ENCODE measurements at regions of chr9 and their contacts with region 1.

Region 1: DNA sequence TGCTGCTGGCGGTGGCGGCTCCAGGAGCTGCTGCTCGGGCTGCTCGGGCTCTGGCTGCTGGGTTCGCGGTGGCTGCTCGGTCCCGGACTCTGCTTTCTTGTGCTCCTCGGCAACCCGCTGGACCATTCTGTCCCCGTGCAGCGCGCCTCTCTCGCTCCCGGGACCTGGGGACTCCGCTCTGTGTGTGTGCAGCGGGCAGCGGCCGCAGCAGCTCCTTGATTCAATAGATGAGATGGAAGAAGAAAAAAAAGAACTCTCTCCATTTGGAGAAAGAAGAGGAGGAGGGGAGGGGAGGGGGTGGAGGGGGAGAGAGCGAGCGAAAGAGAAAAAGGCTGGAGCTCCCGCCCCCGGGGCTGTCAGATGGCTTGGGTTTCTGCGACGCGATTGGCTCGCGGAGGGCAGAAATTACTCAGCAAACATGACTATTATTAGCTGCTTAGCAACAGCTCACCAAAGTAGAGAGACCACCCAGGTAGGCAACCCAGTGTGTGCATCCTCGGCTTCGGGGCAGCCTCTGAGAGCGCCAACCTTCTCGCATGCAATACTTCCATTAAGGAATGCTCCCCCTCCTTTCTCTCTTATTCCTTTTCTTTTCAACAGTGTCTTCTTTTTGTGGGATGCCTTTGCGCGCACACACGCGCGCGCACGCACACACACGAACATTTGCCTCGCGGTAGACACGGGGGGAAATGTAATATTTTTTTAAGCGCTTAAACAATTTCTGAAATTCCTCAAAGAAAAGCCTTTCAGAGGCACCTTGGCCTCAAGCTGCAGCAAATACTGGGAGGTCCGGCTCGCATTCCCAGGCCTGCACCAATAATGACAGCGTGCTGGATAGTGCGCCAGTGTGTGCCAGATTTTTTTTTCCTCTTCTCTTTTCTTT is 7.6 kb downstream of the PTCH1 start:
- DNase-seq: peak in 9 of 10 donors; percentile 44 to 80 (median 68)
- ATAC-seq: peak; percentile 28 to 52
- H3K4me3 Mint-ChIP-seq: peak overlapping the region; percentile 85 to 100 (median 94)
- H3K27ac Mint-ChIP-seq: peak overlapping the region; percentile 74 to 94 (median 84)
- H3K4me1 Mint-ChIP-seq: peaks cover 29 to 65% (median 46%) of the 10 kb centered on the region in 4 donors
- H3K27me3 Mint-ChIP-seq: peaks cover 0 to 25% (median 0%) of the 10 kb centered on the region in 5 donors

Region 2: GRCh38 chr9:95462249-95463147 is 46.7 kb before region 1 on chr9:
- POLR2A ChIA-PET with region 1: interaction called, 15 read pairs
- DNase-seq: peak; percentile 48 to 92 (median 81)
- ATAC-seq: peak; percentile 96 to 97
- H3K4me3 Mint-ChIP-seq: peak overlapping the region; percentile 71 to 90 (median 87)
- H3K27ac Mint-ChIP-seq: peak overlapping the region; percentile 24 to 92 (median 74)
- H3K4me1 Mint-ChIP-seq: peaks cover 21 to 44% (median 40%) of the 10 kb centered on the region in 4 donors
- H3K27me3 Mint-ChIP-seq: peaks cover 0 to 6% (median 0%) of the 10 kb centered on the region in 5 donors

Region 3: DNA sequence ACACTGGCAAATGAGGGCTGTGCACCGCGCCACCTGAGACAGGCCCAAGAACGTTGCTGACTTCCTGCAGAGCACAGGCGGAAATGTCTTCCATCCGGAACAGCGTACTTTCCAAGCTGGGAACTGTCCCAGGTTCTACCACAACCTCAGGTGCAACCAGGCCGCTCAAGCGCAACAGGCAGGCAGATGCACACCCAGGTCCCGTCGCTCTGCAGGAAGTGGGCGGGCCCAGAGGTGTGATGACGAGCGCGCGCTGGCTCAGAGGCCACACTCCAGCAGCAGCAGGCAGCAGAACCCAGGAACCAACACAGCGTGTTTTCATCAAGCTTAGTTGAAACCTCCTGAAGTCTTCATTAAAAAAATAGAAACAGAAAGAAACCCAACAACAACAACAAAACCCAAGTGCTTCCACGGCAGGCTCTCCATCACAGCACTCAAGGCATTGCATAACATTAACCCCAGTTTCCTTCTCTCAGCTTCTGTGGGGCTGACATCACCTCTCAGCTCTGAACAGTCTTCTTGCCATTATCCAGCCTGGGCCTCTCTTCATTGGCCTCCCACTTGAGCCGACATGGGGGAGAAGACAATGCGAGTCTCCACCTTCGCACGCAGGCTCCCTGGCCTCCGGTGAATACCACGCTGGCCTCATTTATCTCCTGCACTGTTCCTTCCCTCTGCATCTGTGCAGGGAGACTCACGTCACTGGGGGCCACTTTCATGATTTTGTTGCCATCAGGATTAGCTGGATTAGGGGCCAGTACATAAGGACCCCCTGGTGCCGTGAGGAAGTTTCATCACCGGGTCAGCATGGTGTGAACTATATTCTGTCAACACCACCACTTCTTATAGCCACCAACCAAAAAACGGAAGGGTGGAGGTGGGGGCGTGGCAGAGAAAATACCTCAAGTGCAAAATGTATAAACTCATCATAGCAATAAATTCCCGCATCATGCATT is 14.5 kb before region 1 on chr9:
- POLR2A ChIA-PET with region 1: interaction called, 99 read pairs
- DNase-seq: peak; percentile 73 to 93 (median 88)
- ATAC-seq: peak; percentile 94
- H3K4me3 Mint-ChIP-seq: peak overlapping the region; percentile 76 to 97 (median 91)
- H3K27ac Mint-ChIP-seq: peak overlapping the region; percentile 89 to 99 (median 98)
- H3K4me1 Mint-ChIP-seq: peaks cover 32 to 85% (median 82%) of the 10 kb centered on the region in 4 donors
- H3K27me3 Mint-ChIP-seq: peaks cover 0 to 12% (median 0%) of the 10 kb centered on the region in 5 donors

Region 4: DNA sequence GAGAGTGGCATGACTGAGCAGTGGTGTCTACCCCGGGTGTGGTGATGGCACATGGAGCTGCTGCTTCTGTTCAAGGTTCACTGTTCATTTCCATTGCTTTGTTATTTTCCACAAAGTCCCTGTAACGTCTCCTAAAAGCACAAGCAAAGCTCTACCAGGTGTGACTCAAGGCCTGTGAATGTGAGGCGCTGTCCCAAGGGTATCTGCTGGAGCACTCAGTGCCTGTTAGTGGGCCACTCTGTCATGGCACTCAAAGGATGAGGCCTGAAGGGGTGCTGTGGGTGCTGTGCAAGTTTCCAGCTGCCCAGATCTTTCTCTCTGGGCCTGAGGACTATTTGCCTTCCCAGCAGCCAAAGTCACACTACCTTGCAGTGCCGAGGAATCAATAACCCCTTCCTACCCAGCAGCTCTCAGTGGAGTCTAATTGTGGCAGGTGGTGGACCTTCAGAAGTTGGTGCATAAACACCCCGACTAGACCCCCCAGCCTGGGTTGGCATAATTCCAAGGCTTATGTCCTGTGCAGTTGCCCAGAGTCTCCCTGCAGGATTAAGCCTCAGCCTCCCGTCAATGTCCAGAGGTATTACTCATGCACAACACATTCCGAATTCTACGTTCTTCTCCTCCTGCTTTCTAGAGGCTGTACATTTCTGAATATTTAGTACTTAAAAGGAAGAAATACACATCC is 24.9 kb after region 1 on chr9:
- POLR2A ChIA-PET with region 1: no interaction called
- DNase-seq: no peak
- ATAC-seq: no peak
- H3K4me3 Mint-ChIP-seq: no peak overlapping the region
- H3K27ac Mint-ChIP-seq: no peak overlapping the region
- H3K4me1 Mint-ChIP-seq: no peaks in the 10 kb centered on the region
- H3K27me3 Mint-ChIP-seq: peaks cover 0 to 17% (median 4%) of the 10 kb centered on the region in 5 donors